ENCODE measurements at regions of chr9 and their contacts with region 1.

Region 1: GRCh38 chr9:108953983-108954574 is 19.9 kb downstream of the ABITRAM start:
- DNase-seq: peak; percentile 48 to 68 (median 67)
- H3K4me3 ChIP-seq: no peak overlapping the region
- H3K27ac ChIP-seq: no peak overlapping the region
- H3K4me1 ChIP-seq: peaks cover 0 to 4% (median 0%) of the 10 kb centered on the region in 4 experiments
- H3K27me3 ChIP-seq: no peaks in the 10 kb centered on the region

Region 2: DNA sequence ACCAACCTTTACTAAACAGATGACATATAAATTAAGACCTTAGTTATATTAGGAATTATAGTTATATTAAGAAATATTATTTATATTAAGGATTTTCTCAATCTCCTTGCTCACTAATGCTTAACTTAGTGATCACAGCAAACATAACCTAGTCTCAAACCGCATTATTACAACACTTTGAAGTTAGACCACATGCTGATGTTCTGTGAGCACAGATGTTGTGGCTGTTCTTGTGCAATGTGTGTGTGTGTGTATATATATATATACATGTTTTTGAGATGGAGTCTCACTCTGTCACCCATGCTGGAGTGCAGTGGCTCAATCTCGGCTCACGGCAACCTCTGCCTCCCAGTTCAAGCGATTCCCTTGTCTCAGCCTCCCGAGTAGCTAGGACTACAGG is 40.7 kb before region 1 on chr9:
- CTCF ChIA-PET with region 1: no interaction called
- POLR2A ChIA-PET with region 1: no interaction called
- DNase-seq: no peak
- H3K4me3 ChIP-seq: no peak overlapping the region
- H3K27ac ChIP-seq: no peak overlapping the region
- H3K4me1 ChIP-seq: no peaks in the 10 kb centered on the region
- H3K27me3 ChIP-seq: no peaks in the 10 kb centered on the region

Region 3: DNA sequence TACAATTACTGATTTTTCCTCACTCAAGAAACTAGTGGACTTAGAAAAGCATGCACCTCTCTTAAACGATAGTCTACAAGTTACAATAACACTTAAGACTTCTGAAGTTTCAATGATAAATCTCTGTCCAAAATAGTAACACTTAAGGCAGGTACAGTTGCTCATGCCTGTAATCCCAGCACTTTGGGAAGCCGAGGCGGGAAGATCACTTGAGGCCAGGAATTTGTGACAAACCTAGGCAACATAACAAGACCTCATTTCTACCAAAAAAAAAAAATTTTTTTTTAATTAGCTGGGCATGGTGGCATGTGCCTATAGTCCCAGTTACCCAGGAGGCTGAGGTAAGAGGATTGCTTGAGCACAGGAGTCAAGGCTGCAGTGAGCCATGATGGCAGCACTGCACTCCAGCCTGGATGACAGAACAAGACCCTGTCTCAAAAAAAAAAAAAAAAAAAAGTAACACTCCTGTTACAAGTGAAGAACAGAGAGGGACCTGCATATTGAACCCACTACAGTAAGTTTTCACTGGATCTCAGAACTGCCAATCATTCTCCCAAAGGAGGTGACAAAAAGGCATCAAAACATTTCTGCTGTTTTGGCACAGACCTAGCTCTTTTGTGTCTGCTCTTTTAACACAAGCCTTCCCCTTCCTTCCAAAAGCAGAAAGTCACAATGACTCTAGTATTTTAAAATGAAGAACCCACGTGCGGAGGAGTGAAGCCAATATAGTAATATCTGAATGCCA is 16.3 kb before region 1 on chr9:
- CTCF ChIA-PET with region 1: interaction called, 21 read pairs
- POLR2A ChIA-PET with region 1: no interaction called
- DNase-seq: no peak
- H3K4me3 ChIP-seq: no peak overlapping the region
- H3K27ac ChIP-seq: no peak overlapping the region
- H3K4me1 ChIP-seq: peaks cover 4 to 20% (median 14%) of the 10 kb centered on the region in 4 experiments
- H3K27me3 ChIP-seq: no peaks in the 10 kb centered on the region

Measured in common myeloid progenitor, CD34-positive (primary cell).